Activated CD4-positive, alpha-beta memory T cell treated with anti-CD3 and anti-CD28 coated beads for 36 hours (primary cell): ENCODE measurements at regions of chr3 and their contacts with region 1.

Region 1: GRCh38 chr3:32285891-32286290 is 47.4 kb downstream of the CMTM8 start:
- DNase-seq: peak; percentile 45
- H3K4me3 Mint-ChIP-seq: no peak overlapping the region
- H3K27ac Mint-ChIP-seq: peak overlapping the region; percentile 69
- H3K4me1 Mint-ChIP-seq: peaks cover 48% of the 10 kb centered on the region
- H3K27me3 Mint-ChIP-seq: no peaks in the 10 kb centered on the region

Region 2: DNA sequence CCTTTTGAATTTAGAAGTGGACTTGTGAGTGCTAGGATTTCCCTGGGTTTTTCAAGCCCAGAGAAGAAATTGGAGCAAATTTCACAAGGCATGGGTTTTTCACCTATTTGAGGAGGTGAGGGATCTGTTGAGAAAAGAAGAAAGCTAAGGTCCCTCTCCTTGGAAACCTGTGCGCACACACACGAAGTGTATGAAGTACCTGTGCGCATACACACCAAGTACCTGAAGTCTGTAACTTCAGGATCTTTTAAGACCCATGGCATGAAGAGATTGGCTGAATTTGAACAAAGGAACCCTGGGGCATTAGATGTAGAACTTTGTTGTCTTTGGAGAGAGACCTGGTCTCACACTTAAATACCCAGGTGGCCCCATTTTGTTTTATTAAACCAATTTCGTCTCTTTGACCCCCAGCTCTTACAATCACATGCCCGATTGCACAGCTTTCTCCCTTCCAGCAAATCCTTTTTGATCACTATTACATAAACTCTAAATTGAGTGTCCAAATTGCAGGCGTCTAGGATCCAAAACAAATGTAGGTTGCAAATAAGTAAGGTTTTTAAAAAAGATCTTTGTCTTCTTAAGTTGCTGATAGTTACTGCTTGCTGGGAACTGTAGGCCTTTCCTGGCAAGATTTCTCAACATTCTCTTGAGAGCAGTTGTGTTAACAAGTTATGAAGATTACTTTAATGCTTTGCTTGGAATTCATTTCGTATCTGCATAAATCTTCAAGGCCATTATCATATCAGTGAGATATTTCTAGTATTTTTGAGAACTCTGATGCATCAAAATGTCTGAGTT is 16.9 kb after region 1 on chr3:
- CTCF ChIA-PET with region 1: interaction called, 32 read pairs
- POLR2A ChIA-PET with region 1: no interaction called
- intact Hi-C with region 1: no loop called
- DNase-seq: no peak
- H3K4me3 Mint-ChIP-seq: peak overlapping the region; percentile 60
- H3K27ac Mint-ChIP-seq: peak overlapping the region; percentile 86
- H3K4me1 Mint-ChIP-seq: peaks cover 66% of the 10 kb centered on the region
- H3K27me3 Mint-ChIP-seq: no peaks in the 10 kb centered on the region

Region 3: GRCh38 chr3:32334675-32335074 is 48.8 kb after region 1 on chr3:
- CTCF ChIA-PET with region 1: interaction called, 14 read pairs
- POLR2A ChIA-PET with region 1: no interaction called
- intact Hi-C with region 1: no loop called
- DNase-seq: peak; percentile 80
- H3K4me3 Mint-ChIP-seq: no peak overlapping the region
- H3K27ac Mint-ChIP-seq: no peak overlapping the region
- H3K4me1 Mint-ChIP-seq: peaks cover 48% of the 10 kb centered on the region
- H3K27me3 Mint-ChIP-seq: no peaks in the 10 kb centered on the region